K562 (cell line): ENCODE measurements at regions of chr19 and their contacts with region 1.

Region 1: DNA sequence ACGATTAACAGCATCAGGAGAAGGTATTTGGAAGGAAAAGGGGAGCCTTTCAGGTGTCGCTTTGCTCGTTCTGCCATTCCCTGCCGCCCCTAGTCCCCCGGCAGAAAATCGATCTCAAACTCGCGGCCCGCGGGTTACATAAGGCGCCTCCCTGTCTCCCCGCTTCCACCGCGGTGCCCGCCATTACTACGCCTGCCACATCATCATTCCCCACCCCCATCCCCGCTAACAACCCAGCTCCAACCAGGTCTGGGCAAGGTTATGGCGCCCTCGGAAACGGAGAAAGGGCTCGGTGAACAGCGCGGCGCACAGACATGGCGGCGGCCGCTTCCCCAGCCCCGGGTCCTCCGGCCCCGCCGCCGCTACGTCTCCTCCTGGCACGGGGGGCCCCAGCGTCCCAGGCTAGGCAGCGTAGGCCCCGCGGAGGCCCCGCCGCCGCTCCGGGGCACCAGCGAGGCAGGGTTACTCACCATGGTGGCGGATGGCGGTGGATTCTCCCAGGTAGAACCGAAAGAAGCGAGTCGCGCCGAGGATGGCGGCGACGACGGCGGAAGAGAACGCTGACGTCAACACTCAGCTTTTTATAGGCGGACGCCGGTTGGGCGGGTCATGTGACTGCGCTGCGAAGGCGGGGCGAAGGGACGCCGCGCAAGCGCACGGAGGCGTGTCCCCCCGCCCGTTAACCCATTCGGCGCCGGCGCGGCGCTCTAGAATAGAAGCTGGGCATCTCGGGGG is at the start of gene EEF2:
- DNase-seq: peak; percentile 91 to 98 (median 92)
- ATAC-seq: peak; percentile 56
- H3K4me3 ChIP-seq: peak within 1 kb of the TSS; percentile 99
- H3K27ac ChIP-seq: peak within 1 kb of the TSS; percentile 99
- H3K4me1 ChIP-seq: peaks cover 25 to 58% of the 10 kb centered on the region in 2 experiments; a peak in 4 of 5 replicates
- H3K27me3 ChIP-seq: no peaks in the 10 kb centered on the region
- CTCF ChIP-seq: no peak
- EP300 ChIP-seq: no peak
- POLR2A ChIP-seq: peak; percentile 100
- RAD21 ChIP-seq: no peak
- polyA plus RNA-seq, gene EEF2: 372 to 422 TPM

Region 2: DNA sequence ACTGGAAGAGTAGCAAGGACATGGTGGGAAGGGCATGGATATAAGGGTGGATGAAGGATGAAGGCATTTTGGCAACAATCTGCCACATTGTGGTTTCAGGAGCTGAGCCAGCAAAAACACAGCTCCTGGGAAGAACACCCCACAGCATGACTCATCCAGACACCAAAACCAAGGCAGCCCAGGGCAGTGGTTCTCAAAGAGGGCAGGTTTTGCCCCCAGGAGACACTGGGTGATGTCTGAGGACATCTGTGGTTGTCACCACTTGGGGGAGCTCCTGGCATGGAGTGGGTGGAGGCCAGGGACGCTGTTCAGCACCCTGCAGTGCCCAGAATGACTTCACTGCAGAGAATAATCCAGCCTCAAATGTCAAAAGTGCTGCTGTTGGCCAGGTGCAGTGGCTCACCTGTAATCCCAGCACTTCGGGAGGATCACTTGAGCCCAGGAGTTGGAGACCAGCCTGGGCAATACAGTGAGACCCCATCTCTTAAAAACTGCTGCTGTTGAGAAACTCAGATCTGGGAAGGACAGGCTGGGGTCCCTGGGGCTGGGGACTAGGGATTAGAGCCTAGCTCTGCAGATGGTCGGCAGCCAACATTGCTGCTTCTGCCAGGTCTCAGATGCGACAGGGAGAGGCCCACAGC is 132.3 kb before region 1 on chr19:
- CTCF ChIA-PET with region 1: interaction called, 5 read pairs
- POLR2A ChIA-PET with region 1: interaction called, 4 read pairs
- in situ Hi-C with region 1: no loop called
- intact Hi-C with region 1: loop called (anchors 2 kb)
- DNase-seq: peak in 3 of 4 experiments; percentile 39 to 79 (median 63)
- ATAC-seq: peak; percentile 81
- H3K4me3 ChIP-seq: no peak overlapping the region
- H3K27ac ChIP-seq: no peak overlapping the region
- H3K4me1 ChIP-seq: peaks cover 18 to 42% of the 10 kb centered on the region in 2 experiments; a peak in 4 of 5 replicates
- H3K27me3 ChIP-seq: peaks cover 0 to 12% of the 10 kb centered on the region in 2 experiments; a peak in 1 of 5 replicates
- CTCF ChIP-seq: peak; percentile 81 to 82 (median 82)
- EP300 ChIP-seq: no peak
- POLR2A ChIP-seq: no peak
- RAD21 ChIP-seq: peak; percentile 76 to 89

Region 3: GRCh38 chr19:3995627-3996026 is 10.6 kb after region 1 on chr19:
- CTCF ChIA-PET with region 1: no interaction called
- POLR2A ChIA-PET with region 1: interaction called, 16 read pairs
- in situ Hi-C with region 1: no loop called
- intact Hi-C with region 1: no loop called
- DNase-seq: no peak
- ATAC-seq: no peak
- H3K4me3 ChIP-seq: no peak overlapping the region
- H3K27ac ChIP-seq: no peak overlapping the region
- H3K4me1 ChIP-seq: peaks cover 2 to 10% of the 10 kb centered on the region in 2 experiments; a peak in 4 of 5 replicates
- H3K27me3 ChIP-seq: no peaks in the 10 kb centered on the region
- CTCF ChIP-seq: no peak
- EP300 ChIP-seq: no peak
- POLR2A ChIP-seq: no peak
- RAD21 ChIP-seq: no peak

Region 4: GRCh38 chr19:4139614-4140236 is 154.7 kb after region 1 on chr19:
- CTCF ChIA-PET with region 1: interaction called, 4 read pairs
- POLR2A ChIA-PET with region 1: interaction called, 5 read pairs
- in situ Hi-C with region 1: no loop called
- intact Hi-C with region 1: loop called (anchors 5 kb)
- DNase-seq: peak; percentile 82 to 86 (median 84)
- ATAC-seq: peak; percentile 98
- H3K4me3 ChIP-seq: no peak overlapping the region
- H3K27ac ChIP-seq: no peak overlapping the region
- H3K4me1 ChIP-seq: peaks cover 0 to 12% of the 10 kb centered on the region in 2 experiments; a peak in 2 of 5 replicates
- H3K27me3 ChIP-seq: no peaks in the 10 kb centered on the region; a peak in 1 of 5 replicates
- CTCF ChIP-seq: peak; percentile 92 to 94 (median 93)
- EP300 ChIP-seq: no peak
- POLR2A ChIP-seq: no peak
- RAD21 ChIP-seq: peak; percentile 40 to 66

Region 5: DNA sequence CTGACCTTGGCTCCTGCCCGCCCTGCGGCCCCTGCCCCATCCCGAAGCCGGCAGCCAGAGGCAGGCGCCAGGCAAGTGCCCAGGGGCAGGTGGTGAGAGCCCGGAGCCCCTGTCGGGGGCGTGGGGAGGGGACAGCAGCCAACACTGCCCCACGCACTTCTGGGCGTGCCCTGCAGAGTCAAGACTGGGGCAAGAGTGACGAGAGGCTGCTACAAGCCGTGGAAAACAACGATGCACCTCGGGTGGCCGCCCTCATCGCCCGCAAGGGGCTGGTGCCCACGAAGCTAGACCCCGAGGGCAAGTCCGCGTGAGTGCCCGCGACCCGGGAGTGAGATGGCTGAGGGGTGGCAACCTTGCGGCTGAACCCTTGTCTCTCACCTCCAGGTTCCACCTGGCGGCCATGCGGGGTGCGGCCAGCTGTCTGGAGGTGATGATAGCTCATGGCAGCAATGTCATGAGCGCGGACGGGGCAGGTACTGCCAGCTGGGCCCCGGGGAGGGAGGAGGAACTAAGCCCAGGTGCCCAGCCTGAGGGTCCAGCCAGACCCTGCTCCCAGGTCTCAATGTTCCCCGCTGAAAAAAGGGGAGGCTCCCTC is 214.7 kb after region 1 on chr19:
- CTCF ChIA-PET with region 1: interaction called, 31 read pairs
- POLR2A ChIA-PET with region 1: interaction called, 13 read pairs
- in situ Hi-C with region 1: loop called (anchors 5 kb)
- intact Hi-C with region 1: loop called (anchors 1 kb)
- DNase-seq: peak; percentile 37 to 60 (median 50)
- ATAC-seq: peak; percentile 57
- H3K4me3 ChIP-seq: no peak overlapping the region
- H3K27ac ChIP-seq: no peak overlapping the region
- H3K4me1 ChIP-seq: peaks cover 5 to 23% of the 10 kb centered on the region in 2 experiments; a peak in 4 of 5 replicates
- H3K27me3 ChIP-seq: peaks cover 0 to 23% of the 10 kb centered on the region in 2 experiments; a peak in 4 of 5 replicates
- CTCF ChIP-seq: peak; percentile 39 to 49 (median 42); a peak in 5 of 6 replicates
- EP300 ChIP-seq: no peak
- POLR2A ChIP-seq: no peak
- RAD21 ChIP-seq: peak in 1 of 2 experiments; percentile 22; a peak in 1 of 4 replicates